ENCODE measurements at regions of chr14 and their contacts with region 1.

Region 1: DNA sequence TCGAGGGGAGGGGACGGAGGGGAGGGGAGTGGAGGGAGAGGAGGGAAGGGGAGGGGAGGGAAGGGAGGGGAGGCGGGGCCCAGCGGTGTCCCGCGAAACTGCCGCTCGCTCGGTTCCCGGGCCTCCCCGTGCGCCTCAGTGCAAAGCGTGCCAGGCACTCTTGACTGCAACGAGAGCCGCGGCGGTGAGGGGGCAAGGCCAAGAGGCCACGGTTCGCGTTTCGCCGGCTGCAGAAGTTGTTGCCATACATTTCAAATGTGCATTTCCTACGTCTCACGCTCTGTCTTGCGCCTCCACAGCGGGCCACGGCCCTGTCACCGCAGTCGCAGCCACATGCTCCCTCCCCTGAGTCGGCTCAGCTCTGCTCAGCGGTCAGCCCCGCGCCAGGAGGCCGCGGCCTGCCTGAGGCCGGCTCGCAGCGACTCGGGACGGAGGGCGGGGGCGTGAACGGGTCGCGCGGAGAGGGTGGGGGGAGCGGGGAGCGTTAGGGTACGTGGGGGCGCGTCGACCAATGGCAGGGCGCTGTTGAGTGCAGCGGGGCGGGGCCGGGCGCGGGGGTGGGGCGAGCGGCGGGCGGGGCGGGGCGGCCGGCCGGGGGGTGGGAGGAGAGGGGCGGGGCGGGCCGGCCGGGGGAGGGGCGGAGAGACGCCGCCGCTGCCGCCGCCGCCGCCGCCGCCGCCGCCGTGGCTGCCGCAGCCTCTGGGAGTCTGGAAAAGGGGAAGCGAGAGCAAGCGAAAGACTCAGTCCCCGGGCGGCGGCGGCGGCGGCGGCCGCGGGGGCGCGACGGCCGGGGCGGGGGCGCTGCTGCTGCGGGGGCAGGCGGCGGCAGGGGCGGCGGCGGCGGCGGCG is at the start of gene PPP2R5C:
- DNase-seq: peak; percentile 97
- H3K4me3 ChIP-seq: peak within 1 kb of the TSS; percentile 65 to 98 (median 82)
- H3K27ac ChIP-seq: peak within 1 kb of the TSS; percentile 89 to 98 (median 95)
- H3K4me1 ChIP-seq: peaks cover 0 to 22% (median 19%) of the 10 kb centered on the region in 4 donors
- H3K27me3 ChIP-seq: no peaks in the 10 kb centered on the region
- CTCF ChIP-seq: no peak
- EP300 ChIP-seq: no peak
- POLR2A ChIP-seq: peak; percentile 72 to 91
- total RNA-seq, gene PPP2R5C: 115 to 175 (median 147) TPM

Region 2: GRCh38 chr14:101412741-101413140 is 348.5 kb before region 1 on chr14:
- intact Hi-C with region 1: no loop called
- DNase-seq: no peak
- H3K4me3 ChIP-seq: no peak overlapping the region
- H3K27ac ChIP-seq: no peak overlapping the region
- H3K4me1 ChIP-seq: no peaks in the 10 kb centered on the region
- H3K27me3 ChIP-seq: no peaks in the 10 kb centered on the region
- CTCF ChIP-seq: no peak
- EP300 ChIP-seq: no peak
- POLR2A ChIP-seq: no peak

Region 3: DNA sequence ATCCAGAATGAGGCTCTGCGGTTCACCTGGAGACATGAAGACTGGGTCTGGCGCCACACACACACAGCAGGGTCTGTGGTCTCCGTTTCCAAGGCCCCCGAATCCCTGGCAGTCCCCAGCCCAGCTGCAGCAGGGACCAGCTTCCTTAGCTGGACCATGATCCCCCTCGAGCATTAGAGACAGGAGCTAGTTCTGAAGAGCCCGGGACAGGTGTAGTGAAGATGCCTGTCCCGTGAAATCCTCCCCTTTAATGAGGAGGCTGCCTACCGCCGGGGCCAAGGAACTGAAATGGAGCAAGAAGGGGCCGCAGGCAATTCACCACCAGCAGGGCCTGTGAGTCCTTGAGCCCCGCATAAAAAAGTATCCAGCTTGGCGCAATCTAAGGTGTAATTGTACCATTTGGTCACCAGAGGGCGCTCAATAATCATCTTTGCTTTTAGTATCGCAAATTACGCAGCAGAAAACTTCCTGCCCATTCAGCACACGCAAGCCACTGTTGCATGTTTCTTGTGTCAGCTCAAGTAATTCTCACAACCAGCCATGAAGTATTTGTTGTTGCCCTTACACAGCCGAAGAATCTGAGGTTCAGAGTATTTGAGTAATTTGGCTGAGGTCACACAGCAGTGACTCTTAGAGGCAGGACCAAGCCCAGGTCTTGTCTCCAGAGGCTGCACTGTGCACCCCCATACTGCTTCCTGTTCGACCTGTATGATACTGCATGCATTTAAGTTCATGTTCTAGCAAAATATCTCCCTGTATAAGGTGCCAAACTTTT is 54.0 kb before region 1 on chr14:
- intact Hi-C with region 1: loop called (anchors 5 kb)
- DNase-seq: no peak
- H3K4me3 ChIP-seq: no peak overlapping the region
- H3K27ac ChIP-seq: peak overlapping the region in 2 of 4 donors; percentile 36 to 51
- H3K4me1 ChIP-seq: peaks cover 0 to 16% (median 10%) of the 10 kb centered on the region in 4 donors
- H3K27me3 ChIP-seq: peaks cover 0 to 28% (median 12%) of the 10 kb centered on the region in 3 donors
- CTCF ChIP-seq: peak; percentile 73 to 89 (median 82)
- EP300 ChIP-seq: no peak
- POLR2A ChIP-seq: no peak

Region 4: DNA sequence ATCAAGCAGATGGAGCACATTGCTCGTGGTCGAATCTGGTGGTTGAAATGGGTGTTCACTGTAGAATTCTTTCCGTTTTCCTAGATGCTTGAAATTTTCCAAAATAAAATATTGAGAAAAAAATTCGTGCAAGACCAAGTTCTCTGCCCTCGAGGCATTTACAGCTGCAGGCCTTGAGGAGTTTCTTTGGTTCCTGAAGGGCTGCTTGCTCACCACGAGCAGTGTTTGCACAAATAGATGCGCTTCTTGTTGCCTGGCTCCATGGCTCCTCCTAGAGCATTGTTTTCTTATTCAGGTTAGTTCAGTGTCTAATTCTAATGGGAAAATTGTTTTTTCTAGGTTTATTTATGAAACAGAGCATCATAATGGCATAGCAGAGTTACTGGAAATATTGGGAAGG is 128.6 kb after region 1 on chr14:
- intact Hi-C with region 1: no loop called
- DNase-seq: no peak
- H3K4me3 ChIP-seq: no peak overlapping the region
- H3K27ac ChIP-seq: no peak overlapping the region
- H3K4me1 ChIP-seq: no peaks in the 10 kb centered on the region
- H3K27me3 ChIP-seq: no peaks in the 10 kb centered on the region
- CTCF ChIP-seq: no peak
- EP300 ChIP-seq: no peak
- POLR2A ChIP-seq: no peak

Region 5: DNA sequence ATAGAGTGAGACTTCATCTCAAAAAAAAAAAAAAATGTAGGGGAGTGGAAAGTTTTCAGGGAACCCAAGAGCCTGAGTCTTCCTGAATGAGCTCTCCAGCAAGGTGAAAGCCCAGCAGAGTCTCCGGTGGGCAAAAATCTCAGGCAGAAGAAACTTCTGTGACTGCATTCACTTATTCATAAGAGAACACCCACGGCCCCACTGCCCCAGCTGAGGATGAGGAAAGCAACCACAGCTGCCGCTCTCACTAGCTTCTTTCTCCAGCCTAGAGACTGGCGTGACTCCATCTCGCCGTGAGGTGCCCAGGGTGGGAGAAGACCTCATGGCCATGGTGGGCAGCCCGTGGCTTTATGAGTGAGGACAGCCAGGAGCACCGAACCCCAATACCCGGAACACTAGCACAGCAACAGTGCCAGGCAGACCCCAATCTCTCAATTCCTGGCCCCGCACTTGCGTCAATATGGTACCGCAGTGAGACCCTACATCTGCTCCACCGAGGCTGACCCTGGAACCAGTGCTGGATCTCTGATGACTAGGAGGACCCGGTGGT is 173.4 kb after region 1 on chr14:
- intact Hi-C with region 1: no loop called
- DNase-seq: peak; percentile 40
- H3K4me3 ChIP-seq: no peak overlapping the region
- H3K27ac ChIP-seq: no peak overlapping the region
- H3K4me1 ChIP-seq: no peaks in the 10 kb centered on the region
- H3K27me3 ChIP-seq: no peaks in the 10 kb centered on the region
- CTCF ChIP-seq: no peak
- EP300 ChIP-seq: no peak
- POLR2A ChIP-seq: no peak

Region 6: DNA sequence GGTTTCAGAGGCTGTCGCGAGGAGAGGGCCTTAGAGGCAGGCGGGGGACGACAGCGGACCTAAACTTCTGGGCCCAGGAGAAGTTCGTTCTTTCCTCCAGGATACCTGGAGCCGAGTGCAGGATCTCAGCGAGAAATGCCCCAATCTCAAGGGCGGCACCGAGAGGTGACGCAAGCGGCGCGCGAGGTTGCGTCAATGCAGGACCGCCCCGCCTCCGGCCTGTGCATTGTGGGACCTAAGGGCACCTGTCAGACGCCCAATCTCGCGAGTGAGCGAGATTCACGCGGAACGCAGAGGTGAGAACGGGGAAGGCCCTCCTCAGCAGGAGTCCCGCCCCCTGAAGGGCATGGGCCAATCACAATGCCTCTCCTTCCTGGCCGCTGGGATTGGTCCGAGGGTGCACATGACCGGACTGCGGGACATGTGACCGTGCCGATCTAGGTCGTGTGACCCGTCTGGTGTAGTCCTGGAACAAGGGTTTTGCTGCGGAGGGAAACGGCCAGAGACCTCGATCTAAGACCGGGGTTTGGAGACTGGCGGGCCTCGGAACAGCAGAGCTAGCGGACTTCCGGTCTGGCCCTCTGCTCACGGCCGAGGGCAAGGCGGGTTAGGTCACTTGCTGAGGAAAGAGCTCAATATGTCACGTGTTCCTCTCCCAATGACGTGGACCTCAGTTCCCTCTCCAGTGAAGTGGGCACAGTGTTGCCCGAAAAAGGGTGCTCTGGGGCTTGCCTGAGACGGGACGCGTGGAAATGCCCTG is 186.8 kb after region 1 on chr14:
- intact Hi-C with region 1: loop called (anchors 5 kb)
- DNase-seq: peak; percentile 100
- H3K4me3 ChIP-seq: peak overlapping the region; percentile 63 to 88 (median 82)
- H3K27ac ChIP-seq: peak overlapping the region; percentile 94 to 99 (median 97)
- H3K4me1 ChIP-seq: peaks cover 0 to 24% (median 16%) of the 10 kb centered on the region in 4 donors
- H3K27me3 ChIP-seq: no peaks in the 10 kb centered on the region
- CTCF ChIP-seq: no peak
- EP300 ChIP-seq: peak in 2 of 4 donors; percentile 84 to 94
- POLR2A ChIP-seq: peak; percentile 95 to 96

Region 7: GRCh38 chr14:102272392-102272791 is 511.1 kb after region 1 on chr14:
- intact Hi-C with region 1: no loop called
- DNase-seq: no peak
- H3K4me3 ChIP-seq: no peak overlapping the region
- H3K27ac ChIP-seq: no peak overlapping the region
- H3K4me1 ChIP-seq: peaks cover 0 to 1% (median 0%) of the 10 kb centered on the region in 4 donors
- H3K27me3 ChIP-seq: no peaks in the 10 kb centered on the region
- CTCF ChIP-seq: no peak
- EP300 ChIP-seq: no peak
- POLR2A ChIP-seq: no peak

Measured in sigmoid colon (tissue), 7 donors.